ENCODE measurements at regions of chr11 and their contacts with region 1.

Region 1: DNA sequence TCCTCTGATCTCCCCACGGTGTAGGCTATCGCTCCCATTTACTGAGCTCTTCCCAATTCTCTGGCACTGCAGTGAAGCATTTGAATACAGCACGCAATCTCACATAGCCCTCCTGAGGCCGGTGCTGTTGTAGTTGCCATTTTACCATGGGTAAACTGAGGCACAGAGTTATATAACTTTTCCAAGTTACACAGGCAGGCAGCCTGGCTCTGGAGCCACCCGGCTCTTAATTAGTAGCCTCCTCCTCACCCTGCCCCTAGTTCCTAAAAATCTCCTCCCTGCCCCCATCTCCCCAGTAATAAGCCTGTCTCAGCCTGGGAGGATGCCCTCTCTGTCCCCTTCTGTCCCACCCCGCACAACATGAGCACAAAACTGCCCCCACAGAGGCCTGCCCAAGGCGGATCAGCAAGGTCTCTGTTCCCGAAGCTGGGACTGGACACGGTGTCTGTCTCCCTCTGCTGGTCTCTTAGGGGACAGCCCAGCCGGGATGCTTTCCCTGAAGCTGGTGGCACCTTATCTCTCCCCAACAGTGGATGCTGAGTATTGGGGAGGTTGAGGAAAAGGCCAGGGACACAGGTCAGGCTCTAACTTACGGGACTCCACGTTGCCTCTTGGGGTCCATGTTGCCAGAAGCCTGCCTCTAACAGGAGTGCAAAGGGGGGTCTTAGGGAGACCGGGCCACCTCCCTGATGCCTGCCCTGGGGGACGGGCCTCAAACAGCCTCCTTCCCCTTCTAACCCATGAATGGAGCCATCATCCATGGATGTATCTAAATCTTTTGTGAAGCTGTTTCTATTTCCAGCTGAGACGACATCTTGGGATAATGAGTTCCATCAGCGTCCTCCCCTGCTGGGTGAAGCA is 9.1 kb upstream of the CLCF1 start:
- DNase-seq: no peak
- H3K4me3 ChIP-seq: no peak overlapping the region
- H3K27ac ChIP-seq: no peak overlapping the region
- H3K27me3 ChIP-seq: no peaks in the 10 kb centered on the region
- CTCF ChIP-seq: peak; percentile 99

Region 2: GRCh38 chr11:67265633-67266423 is 116.7 kb before region 1 on chr11:
- CTCF ChIA-PET with region 1: interaction called, 39 read pairs
- POLR2A ChIA-PET with region 1: no interaction called
- DNase-seq: no peak
- H3K4me3 ChIP-seq: peak overlapping the region; percentile 54
- H3K27ac ChIP-seq: no peak overlapping the region
- H3K27me3 ChIP-seq: no peaks in the 10 kb centered on the region
- CTCF ChIP-seq: peak; percentile 62

Region 3: DNA sequence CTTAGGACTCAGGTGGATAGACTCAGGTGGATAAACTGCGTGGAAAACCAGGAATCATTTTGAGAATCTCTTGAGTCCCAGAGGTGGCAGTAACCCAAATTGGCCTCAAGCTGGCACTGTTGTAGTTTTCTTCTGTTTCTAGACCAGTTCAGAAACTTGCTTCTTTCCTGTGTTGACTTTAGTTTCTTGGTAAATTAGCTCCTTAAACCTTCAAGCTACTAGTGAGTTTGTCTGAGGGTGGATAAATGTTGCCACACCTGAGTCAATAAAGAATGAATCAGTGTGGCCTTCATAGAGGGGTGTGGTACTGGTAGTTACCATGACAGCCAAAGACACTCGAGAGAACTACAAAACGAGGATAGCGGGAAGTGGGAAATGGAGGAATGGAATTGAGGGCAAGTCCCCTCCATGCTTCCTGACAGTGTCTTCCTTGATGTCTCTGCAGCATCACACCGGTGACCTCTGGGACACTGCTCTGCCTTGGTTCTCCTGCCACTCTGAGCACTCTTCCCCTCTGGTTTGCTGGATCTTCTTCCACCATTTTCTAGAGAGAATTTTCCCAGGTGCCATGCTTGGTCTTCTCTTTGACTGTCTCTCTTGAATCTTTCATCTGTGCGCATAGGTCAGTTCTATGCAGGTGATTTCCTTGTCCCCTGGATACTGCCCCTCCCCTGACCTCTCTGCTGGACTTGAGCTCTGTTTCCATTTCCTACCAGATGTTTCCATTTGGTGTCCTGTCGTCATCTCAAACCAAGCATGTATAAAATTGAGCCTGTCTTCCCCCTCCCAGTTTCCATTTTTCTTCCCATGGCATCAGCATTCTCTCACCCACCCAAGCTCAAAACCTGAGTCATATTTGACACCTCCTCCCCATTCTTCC is 36.3 kb before region 1 on chr11:
- CTCF ChIA-PET with region 1: interaction called, 716 read pairs
- POLR2A ChIA-PET with region 1: interaction called, 11 read pairs
- DNase-seq: no peak
- H3K4me3 ChIP-seq: no peak overlapping the region
- H3K27ac ChIP-seq: no peak overlapping the region
- H3K27me3 ChIP-seq: no peaks in the 10 kb centered on the region
- CTCF ChIP-seq: peak; percentile 82

Region 4: GRCh38 chr11:67416416-67417335 is 34.2 kb after region 1 on chr11:
- CTCF ChIA-PET with region 1: no interaction called
- POLR2A ChIA-PET with region 1: no interaction called
- DNase-seq: no peak
- H3K4me3 ChIP-seq: no peak overlapping the region
- H3K27ac ChIP-seq: no peak overlapping the region
- H3K27me3 ChIP-seq: peaks cover 25% of the 10 kb centered on the region
- CTCF ChIP-seq: no peak

Region 5: GRCh38 chr11:67508486-67509121 is 126.1 kb after region 1 on chr11:
- CTCF ChIA-PET with region 1: no interaction called
- POLR2A ChIA-PET with region 1: no interaction called
- DNase-seq: peak; percentile 88
- H3K4me3 ChIP-seq: peak overlapping the region; percentile 87
- H3K27ac ChIP-seq: peak overlapping the region; percentile 89
- H3K27me3 ChIP-seq: no peaks in the 10 kb centered on the region
- CTCF ChIP-seq: no peak

Measured in AG04450 (cell line).